CD8-positive, alpha-beta T cell (primary cell): ENCODE measurements at regions of chr4 and their contacts with region 1.

Region 1: DNA sequence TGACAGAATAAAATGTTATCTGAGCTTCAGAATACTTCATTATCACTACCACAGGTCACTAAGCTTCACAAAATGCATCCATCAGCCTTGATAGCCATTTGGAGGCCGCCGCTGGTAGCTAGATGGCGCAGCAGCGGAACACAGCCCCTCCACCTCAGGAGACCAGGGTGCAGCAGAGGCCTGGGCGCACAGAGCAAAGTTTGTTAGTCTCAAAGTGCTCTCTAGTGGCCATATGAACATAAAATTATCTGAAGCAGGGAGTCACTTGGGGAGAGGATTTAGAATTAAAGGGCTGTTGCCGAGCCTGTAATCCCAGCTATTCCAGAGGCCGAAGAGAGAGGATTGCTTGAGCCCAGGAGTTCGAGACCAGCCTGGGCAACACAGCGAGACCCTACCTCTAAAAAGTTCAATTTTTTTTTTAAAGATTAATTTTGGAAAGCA is 8.1 kb upstream of the DCTD start:
- DNase-seq: peak; percentile 27 to 84 (median 57)
- ATAC-seq: peak; percentile 98
- H3K4me3 ChIP-seq: no peak overlapping the region
- H3K4me3 Mint-ChIP-seq: no peak overlapping the region
- H3K27ac ChIP-seq: no peak overlapping the region
- H3K27ac Mint-ChIP-seq: no peak overlapping the region
- H3K4me1 ChIP-seq: no peaks in the 10 kb centered on the region
- H3K4me1 Mint-ChIP-seq: peaks cover 2% of the 10 kb centered on the region
- H3K27me3 ChIP-seq: peaks cover 0 to 2% of the 10 kb centered on the region in 2 experiments
- H3K27me3 Mint-ChIP-seq: peaks cover 14% of the 10 kb centered on the region
- CTCF ChIP-seq: peak; percentile 44

Region 2: GRCh38 chr4:182478475-182478874 is 446.8 kb before region 1 on chr4:
- CTCF ChIA-PET with region 1: interaction called, 5 read pairs
- POLR2A ChIA-PET with region 1: interaction called, 4 read pairs
- intact Hi-C with region 1: loop called (anchors 1 to 2 kb)
- DNase-seq: peak in 2 of 9 experiments; percentile 21 to 38
- ATAC-seq: no peak
- H3K4me3 ChIP-seq: no peak overlapping the region
- H3K4me3 Mint-ChIP-seq: no peak overlapping the region
- H3K27ac ChIP-seq: no peak overlapping the region
- H3K27ac Mint-ChIP-seq: no peak overlapping the region
- H3K4me1 ChIP-seq: no peaks in the 10 kb centered on the region
- H3K4me1 Mint-ChIP-seq: no peaks in the 10 kb centered on the region
- H3K27me3 ChIP-seq: no peaks in the 10 kb centered on the region
- H3K27me3 Mint-ChIP-seq: no peaks in the 10 kb centered on the region
- CTCF ChIP-seq: peak; percentile 78

Region 3: DNA sequence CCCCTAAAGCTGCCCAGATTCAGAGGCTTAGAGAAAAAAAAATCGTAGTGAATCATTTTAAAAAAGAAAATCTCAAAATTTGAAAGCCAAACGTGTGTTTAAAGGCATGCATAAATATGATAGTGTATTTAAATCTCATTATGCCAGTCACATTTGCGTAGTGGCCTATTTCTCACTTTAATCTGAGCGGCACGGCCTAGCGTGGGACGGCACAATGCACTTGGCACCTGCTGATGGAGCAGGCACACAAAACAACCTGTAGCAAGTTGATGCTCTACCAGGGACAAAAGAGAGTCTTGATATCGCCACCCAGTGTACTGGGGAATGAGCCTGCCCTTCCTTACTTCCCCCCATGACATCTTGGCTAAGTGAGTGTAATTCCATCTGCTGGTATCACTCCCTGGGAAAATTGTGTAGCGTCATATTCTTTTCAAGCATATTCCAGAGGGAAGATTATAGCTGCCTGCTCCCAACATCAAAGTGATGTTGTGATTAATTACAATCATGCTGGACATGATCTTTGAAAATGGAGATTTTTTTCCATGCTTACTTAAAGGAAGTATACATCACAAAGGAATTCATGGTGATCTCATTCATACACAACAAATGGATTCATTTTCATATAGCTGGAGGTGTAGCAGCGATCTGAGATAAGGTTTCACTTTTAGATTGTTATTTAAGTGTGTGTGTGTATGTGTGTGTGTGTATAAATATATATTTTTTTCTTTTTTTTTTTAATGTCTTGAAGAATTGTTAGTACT is 146.9 kb before region 1 on chr4:
- CTCF ChIA-PET with region 1: no interaction called
- POLR2A ChIA-PET with region 1: no interaction called
- intact Hi-C with region 1: no loop called
- DNase-seq: no peak
- ATAC-seq: no peak
- H3K4me3 ChIP-seq: no peak overlapping the region
- H3K4me3 Mint-ChIP-seq: no peak overlapping the region
- H3K27ac ChIP-seq: no peak overlapping the region
- H3K27ac Mint-ChIP-seq: no peak overlapping the region
- H3K4me1 ChIP-seq: no peaks in the 10 kb centered on the region
- H3K4me1 Mint-ChIP-seq: no peaks in the 10 kb centered on the region
- H3K27me3 ChIP-seq: no peaks in the 10 kb centered on the region
- H3K27me3 Mint-ChIP-seq: no peaks in the 10 kb centered on the region
- CTCF ChIP-seq: no peak

Region 4: DNA sequence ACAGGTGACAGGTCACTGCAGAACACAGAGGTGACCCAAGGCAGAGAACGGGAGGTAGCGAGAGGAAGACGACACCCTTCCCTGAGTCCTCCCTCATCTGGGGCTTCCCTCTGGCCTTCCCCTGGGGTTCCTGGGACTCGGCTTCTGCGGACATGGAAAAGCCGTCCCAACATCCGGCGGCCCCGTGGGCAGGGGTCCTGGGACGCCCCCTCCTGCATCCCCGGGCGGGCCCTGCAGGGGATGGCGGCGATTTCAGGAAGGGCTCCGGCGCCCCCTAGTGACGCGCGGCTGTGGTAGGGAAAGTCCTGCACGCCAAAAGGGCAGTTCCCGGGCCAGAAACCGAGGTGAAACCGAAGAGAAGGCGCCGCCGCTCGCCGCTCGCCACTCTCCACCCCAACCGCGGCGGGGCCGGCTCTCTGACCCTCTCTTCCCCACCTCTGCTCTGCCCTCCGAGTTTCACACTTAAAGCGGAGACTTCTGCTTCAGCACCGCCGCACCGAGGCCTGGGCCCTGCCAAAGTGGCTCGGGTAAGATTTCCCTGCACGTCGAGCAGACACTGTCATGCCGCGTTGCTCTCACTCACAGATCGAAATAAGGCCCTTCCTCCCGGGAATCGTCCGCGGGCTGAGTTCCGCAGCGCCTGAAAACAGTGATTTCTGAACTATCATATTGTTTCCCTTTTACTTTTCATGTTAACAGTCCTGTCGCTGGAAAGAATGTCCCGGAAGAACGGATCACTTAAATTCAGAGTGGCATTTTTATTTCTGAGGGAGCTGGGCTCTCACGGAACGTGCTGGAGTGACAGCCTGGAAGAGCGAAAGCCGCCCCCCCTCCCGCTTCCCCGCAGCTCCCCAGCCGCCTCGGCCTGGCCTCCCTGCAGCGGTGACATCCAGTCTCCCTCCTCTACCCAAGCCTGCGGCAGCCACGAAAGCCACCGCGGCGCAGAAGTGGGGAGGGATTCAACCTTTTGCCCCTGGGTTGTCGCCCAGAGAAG is 118.8 kb before region 1 on chr4:
- CTCF ChIA-PET with region 1: no interaction called
- POLR2A ChIA-PET with region 1: no interaction called
- intact Hi-C with region 1: loop called in 1 of 2 experiments (anchors 5 kb)
- DNase-seq: peak in 8 of 9 experiments; percentile 31 to 74 (median 64)
- ATAC-seq: peak; percentile 43
- H3K4me3 ChIP-seq: peak overlapping the region; percentile 36
- H3K4me3 Mint-ChIP-seq: peak overlapping the region; percentile 70
- H3K27ac ChIP-seq: no peak overlapping the region
- H3K27ac Mint-ChIP-seq: no peak overlapping the region
- H3K4me1 ChIP-seq: peaks cover 21% of the 10 kb centered on the region
- H3K4me1 Mint-ChIP-seq: peaks cover 15% of the 10 kb centered on the region
- H3K27me3 ChIP-seq: peaks cover 0 to 6% of the 10 kb centered on the region in 2 experiments
- H3K27me3 Mint-ChIP-seq: peaks cover 8% of the 10 kb centered on the region
- CTCF ChIP-seq: peak; percentile 56

Region 5: DNA sequence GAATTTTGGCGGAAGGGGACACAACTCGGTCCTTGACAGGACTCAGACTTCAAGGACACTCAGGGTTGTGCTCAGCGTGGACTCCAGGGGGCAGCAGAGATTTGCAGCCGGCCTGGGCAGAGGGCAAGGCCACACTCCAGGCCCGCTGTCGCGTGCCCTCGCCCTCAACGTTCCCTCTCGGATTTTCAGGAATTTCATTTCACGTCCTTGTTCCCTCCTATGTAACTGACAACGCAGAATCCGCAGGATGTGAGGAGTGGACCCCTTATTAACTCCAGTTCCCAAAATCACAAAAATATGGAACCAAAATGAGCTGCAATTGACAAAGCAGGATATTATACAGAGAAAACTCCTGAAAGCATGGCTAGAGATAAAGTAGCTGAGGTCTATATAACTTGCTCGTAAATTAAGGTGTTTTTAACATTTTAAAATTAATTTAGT is 12.9 kb after region 1 on chr4:
- CTCF ChIA-PET with region 1: interaction called, 24 read pairs
- POLR2A ChIA-PET with region 1: no interaction called
- intact Hi-C with region 1: no loop called
- DNase-seq: peak; percentile 31 to 76 (median 65)
- ATAC-seq: peak; percentile 74
- H3K4me3 ChIP-seq: no peak overlapping the region
- H3K4me3 Mint-ChIP-seq: no peak overlapping the region
- H3K27ac ChIP-seq: no peak overlapping the region
- H3K27ac Mint-ChIP-seq: no peak overlapping the region
- H3K4me1 ChIP-seq: no peaks in the 10 kb centered on the region
- H3K4me1 Mint-ChIP-seq: peaks cover 7% of the 10 kb centered on the region
- H3K27me3 ChIP-seq: no peaks in the 10 kb centered on the region
- H3K27me3 Mint-ChIP-seq: peaks cover 14% of the 10 kb centered on the region
- CTCF ChIP-seq: peak; percentile 83

Region 6: GRCh38 chr4:182994171-182994570 is 68.9 kb after region 1 on chr4:
- CTCF ChIA-PET with region 1: no interaction called
- POLR2A ChIA-PET with region 1: no interaction called
- intact Hi-C with region 1: no loop called
- DNase-seq: no peak
- ATAC-seq: no peak
- H3K4me3 ChIP-seq: no peak overlapping the region
- H3K4me3 Mint-ChIP-seq: no peak overlapping the region
- H3K27ac ChIP-seq: no peak overlapping the region
- H3K27ac Mint-ChIP-seq: no peak overlapping the region
- H3K4me1 ChIP-seq: no peaks in the 10 kb centered on the region
- H3K4me1 Mint-ChIP-seq: no peaks in the 10 kb centered on the region
- H3K27me3 ChIP-seq: no peaks in the 10 kb centered on the region
- H3K27me3 Mint-ChIP-seq: peaks cover 4% of the 10 kb centered on the region
- CTCF ChIP-seq: no peak